ENCODE measurements at regions of chr1 and their contacts with region 1.

Region 1: DNA sequence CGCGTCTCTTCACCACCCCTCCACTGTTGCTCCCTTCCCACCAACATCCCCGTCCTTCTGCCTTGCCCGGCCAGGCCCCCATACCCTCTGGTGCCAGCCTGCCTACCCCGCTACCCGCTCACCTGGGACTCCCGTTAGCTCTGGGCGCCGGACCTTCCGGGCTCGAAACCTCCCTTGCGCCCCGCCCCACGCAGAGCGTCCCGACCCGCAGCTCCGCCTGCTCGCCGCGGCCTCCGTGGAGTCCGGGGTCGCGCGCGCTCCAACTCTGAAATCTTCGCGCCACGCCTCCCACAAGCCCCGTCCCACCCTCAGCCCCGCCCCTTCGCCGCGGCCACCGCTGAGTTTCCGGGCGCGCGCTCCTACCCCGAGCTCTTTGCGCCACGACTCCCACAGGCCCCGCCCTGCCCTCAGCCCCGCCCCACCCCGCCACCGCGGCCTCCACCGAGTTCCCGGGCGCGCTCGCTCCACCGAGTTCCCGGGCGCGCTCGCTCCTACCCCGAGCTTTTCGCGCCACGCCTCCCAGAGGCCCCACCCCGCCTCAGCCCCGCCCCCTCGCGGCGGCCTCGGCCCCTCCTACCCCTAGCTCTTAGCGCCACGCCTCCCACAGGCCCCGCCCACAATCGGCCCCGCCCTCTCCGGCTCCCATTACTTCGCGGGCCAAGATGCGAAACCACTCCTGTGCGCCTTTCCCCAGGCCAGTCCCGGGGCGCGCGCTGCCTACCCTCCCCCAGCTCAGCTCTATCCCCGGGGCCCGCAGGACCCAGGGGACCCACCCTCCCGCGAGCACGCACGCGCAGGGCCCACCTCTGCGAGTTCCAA is at the start of gene IFT25:
- DNase-seq: peak; percentile 96 to 99
- H3K4me3 ChIP-seq: peak within 1 kb of the TSS; percentile 65 to 78 (median 68)
- H3K27ac ChIP-seq: peak within 1 kb of the TSS; percentile 83 to 93
- H3K4me1 ChIP-seq: no peaks in the 10 kb centered on the region
- H3K27me3 ChIP-seq: no peaks in the 10 kb centered on the region
- CTCF ChIP-seq: no peak
- POLR2A ChIP-seq: peak; percentile 38
- total RNA-seq, gene IFT25: 20.8 to 27.7 (median 23.3) TPM

Region 2: DNA sequence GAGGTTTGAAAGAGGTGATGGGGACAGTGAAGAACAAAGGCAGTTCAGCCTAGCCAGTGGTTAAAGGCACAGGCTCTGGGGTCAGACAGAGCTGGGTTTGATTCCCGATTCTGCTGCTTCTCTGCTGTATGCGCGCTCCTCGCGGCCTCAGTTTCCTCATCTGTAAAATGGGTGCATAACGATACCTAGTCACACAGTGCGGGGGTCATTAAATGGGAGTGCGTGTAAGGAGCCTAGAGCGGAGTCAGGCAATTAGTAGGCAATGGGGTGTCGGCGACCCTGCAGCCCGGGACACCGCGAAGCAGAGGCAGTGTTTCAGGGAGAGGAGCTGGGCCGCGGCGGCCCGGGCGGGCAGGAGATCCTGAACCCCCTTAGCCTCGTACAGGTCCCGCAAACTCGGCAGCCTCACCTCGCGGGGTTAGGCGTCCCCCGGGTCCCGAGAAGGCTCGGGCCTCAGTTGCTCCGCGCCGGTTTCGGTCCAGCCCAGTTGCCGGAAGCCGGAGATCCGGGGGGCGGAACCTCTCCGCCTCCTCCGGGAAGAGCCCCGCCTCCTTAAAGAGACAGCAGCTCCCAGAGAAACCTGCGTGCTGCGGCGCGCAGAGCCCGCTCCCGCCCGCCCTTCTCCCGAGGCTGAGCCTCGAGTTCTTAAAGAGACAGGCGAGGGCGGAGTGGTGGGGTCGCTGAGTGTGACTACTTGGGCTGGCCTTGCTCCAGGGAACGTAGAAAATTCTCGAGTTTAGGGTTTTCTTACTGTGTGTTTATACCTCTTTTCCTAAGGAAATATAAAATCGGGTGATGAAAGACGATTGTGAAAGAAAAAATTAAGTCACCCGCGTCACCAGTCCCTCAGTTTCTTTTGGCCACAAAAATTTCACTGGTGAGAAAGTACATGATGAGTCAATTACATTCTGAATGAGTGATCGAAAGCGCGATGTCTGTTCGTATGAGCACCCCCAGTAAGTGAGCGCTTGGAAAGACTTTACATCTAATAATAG is 56.0 kb before region 1 on chr1 and contains the start of gene YIPF1:
- intact Hi-C with region 1: loop called (anchors 2 kb)
- DNase-seq: peak; percentile 86 to 89
- H3K4me3 ChIP-seq: peak within 1 kb of the TSS; percentile 73 to 94 (median 89)
- H3K27ac ChIP-seq: peak within 1 kb of the TSS; percentile 86
- H3K4me1 ChIP-seq: peaks cover 0 to 4% of the 10 kb centered on the region in 2 donors
- H3K27me3 ChIP-seq: no peaks in the 10 kb centered on the region
- CTCF ChIP-seq: no peak
- POLR2A ChIP-seq: no peak
- total RNA-seq, gene YIPF1: 21.3 to 43.6 (median 40.7) TPM

Region 3: GRCh38 chr1:54064299-54064698 is 118.7 kb after region 1 on chr1:
- intact Hi-C with region 1: no loop called
- DNase-seq: no peak
- H3K4me3 ChIP-seq: no peak overlapping the region
- H3K27ac ChIP-seq: no peak overlapping the region
- H3K4me1 ChIP-seq: no peaks in the 10 kb centered on the region
- H3K27me3 ChIP-seq: no peaks in the 10 kb centered on the region
- CTCF ChIP-seq: no peak
- POLR2A ChIP-seq: no peak

Measured in breast epithelium (tissue), 4 donors.